ENCODE measurements at regions of chr2 and their contacts with region 1.

Region 1: GRCh38 chr2:71226965-71227560 is at the start of gene PAIP2B:
- DNase-seq: peak; percentile 98 to 99 (median 99)
- ATAC-seq: peak; percentile 95 to 98 (median 96)
- H3K4me3 ChIP-seq: peak within 1 kb of the TSS; percentile 64 to 91 (median 82)
- H3K27ac ChIP-seq: peak within 1 kb of the TSS; percentile 85 to 97 (median 94)
- H3K4me1 ChIP-seq: peaks cover 0 to 16% (median 7%) of the 10 kb centered on the region in 12 donors
- H3K27me3 ChIP-seq: peaks cover 0 to 5% (median 0%) of the 10 kb centered on the region in 9 donors
- CTCF ChIP-seq: no peak
- POLR2A ChIP-seq: peak; percentile 76 to 88
- total RNA-seq, gene PAIP2B: 38.3 to 89.0 (median 53.2) TPM

Region 2: GRCh38 chr2:71100195-71100964 is 126.7 kb before region 1 on chr2:
- intact Hi-C with region 1: no loop called
- DNase-seq: peak in 3 of 5 donors; percentile 22 to 38 (median 29)
- ATAC-seq: peak in 2 of 4 donors; percentile 52 to 63
- H3K4me3 ChIP-seq: no peak overlapping the region
- H3K27ac ChIP-seq: no peak overlapping the region
- H3K4me1 ChIP-seq: no peaks in the 10 kb centered on the region
- H3K27me3 ChIP-seq: no peaks in the 10 kb centered on the region
- CTCF ChIP-seq: peak; percentile 48 to 80 (median 64)
- POLR2A ChIP-seq: no peak

Region 3: DNA sequence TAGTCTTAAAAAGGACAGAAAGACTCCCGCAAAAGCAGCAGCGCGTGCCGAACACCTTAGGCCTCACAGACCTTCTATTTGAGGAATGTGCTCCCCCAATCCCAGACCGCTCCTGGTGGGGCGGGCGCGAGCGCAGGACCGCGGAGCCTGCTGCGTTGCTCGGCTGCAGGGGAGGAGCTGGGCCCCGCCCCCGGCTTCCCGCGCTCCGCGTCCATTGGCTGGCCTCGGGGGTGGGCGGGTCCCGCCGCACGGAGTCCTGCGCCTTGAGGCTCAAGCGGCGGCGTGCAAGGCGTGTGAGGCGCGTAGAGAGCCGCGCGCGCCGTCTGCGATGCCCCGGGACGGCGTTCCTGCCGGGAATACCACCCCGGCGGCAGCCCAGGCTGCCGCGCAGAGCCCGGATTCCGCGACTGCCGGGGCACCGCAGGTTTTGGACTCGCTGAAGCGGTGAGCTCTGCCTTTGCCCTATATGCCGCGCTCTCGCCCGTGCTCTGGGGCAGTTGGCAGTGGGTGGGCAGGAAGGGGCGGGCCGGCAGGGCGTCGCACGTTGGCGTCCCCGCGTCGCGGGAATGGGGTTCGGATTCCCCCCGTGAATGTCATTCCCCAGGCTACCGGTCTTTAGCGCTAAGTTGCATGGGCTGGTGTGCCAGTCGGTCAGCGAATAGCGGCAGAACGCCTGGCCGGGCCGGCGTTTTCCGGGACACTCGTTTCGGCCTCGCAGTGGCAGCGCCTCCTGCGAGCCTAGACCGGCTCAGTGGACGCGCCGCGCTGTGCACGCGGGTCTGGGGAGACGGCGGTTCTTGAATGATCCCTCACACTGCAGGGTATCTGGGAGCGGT is 49.5 kb after region 1 on chr2:
- intact Hi-C with region 1: loop called in 9 of 10 experiments (anchors 1 to 2 kb)
- DNase-seq: peak; percentile 91 to 95 (median 94)
- ATAC-seq: peak; percentile 89 to 99 (median 96)
- H3K4me3 ChIP-seq: peak overlapping the region; percentile 37 to 83 (median 64)
- H3K27ac ChIP-seq: peak overlapping the region; percentile 62 to 94 (median 89)
- H3K4me1 ChIP-seq: peaks cover 0 to 40% (median 17%) of the 10 kb centered on the region in 12 donors
- H3K27me3 ChIP-seq: peaks cover 0 to 14% (median 0%) of the 10 kb centered on the region in 9 donors
- CTCF ChIP-seq: peak in 3 of 12 donors; percentile 13 to 15 (median 14)
- POLR2A ChIP-seq: peak; percentile 68 to 94

Region 4: DNA sequence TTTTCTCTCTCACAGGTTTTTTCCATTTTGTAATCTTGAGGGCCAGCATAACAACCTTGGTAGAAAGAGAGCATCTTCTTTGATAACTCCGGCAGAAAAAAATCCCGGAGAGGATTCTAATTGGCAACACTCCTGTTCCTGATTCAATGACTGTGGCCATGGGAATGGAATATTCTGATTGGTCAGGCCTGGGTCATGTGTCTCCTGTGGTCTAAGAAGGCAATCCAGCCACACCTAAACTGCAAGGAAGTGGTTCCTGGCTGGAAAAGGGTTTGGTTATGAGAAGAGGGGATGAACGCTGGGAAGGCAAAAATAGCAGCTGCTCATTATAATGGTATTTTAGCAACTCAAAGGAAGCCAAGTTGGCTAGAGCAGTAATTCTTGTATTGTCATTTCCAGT is 79.7 kb after region 1 on chr2:
- intact Hi-C with region 1: no loop called
- DNase-seq: peak in 1 of 5 donors; percentile 34
- ATAC-seq: peak in 3 of 4 donors; percentile 81 to 91 (median 85)
- H3K4me3 ChIP-seq: no peak overlapping the region
- H3K27ac ChIP-seq: peak overlapping the region in 5 of 12 donors; percentile 18 to 44 (median 32)
- H3K4me1 ChIP-seq: peaks cover 0 to 18% (median 4%) of the 10 kb centered on the region in 12 donors
- H3K27me3 ChIP-seq: no peaks in the 10 kb centered on the region
- CTCF ChIP-seq: no peak
- POLR2A ChIP-seq: no peak

Region 5: GRCh38 chr2:71379088-71379487 is 152.0 kb after region 1 on chr2:
- intact Hi-C with region 1: loop called in 1 of 10 experiments (anchors 10 kb)
- DNase-seq: no peak
- ATAC-seq: peak in 2 of 4 donors; percentile 62 to 69
- H3K4me3 ChIP-seq: no peak overlapping the region
- H3K27ac ChIP-seq: no peak overlapping the region
- H3K4me1 ChIP-seq: peaks cover 0 to 10% (median under 1%) of the 10 kb centered on the region in 12 donors
- H3K27me3 ChIP-seq: no peaks in the 10 kb centered on the region
- CTCF ChIP-seq: no peak
- POLR2A ChIP-seq: no peak

Region 6: GRCh38 chr2:71505086-71505769 is 278.2 kb after region 1 on chr2:
- intact Hi-C with region 1: loop called in 4 of 10 experiments (anchors 2 to 5 kb)
- DNase-seq: peak in 3 of 5 donors; percentile 51 to 59 (median 51)
- ATAC-seq: peak in 3 of 4 donors; percentile 7 to 25 (median 20)
- H3K4me3 ChIP-seq: no peak overlapping the region
- H3K27ac ChIP-seq: peak overlapping the region in 11 of 12 donors; percentile 78 to 94 (median 87)
- H3K4me1 ChIP-seq: peaks cover 33 to 69% (median 53%) of the 10 kb centered on the region in 12 donors
- H3K27me3 ChIP-seq: no peaks in the 10 kb centered on the region
- CTCF ChIP-seq: no peak
- POLR2A ChIP-seq: no peak

Region 7: GRCh38 chr2:71563872-71564271 is 336.8 kb after region 1 on chr2:
- intact Hi-C with region 1: no loop called
- DNase-seq: peak in 1 of 5 donors; percentile 42
- ATAC-seq: peak in 1 of 4 donors; percentile 4
- H3K4me3 ChIP-seq: no peak overlapping the region
- H3K27ac ChIP-seq: no peak overlapping the region
- H3K4me1 ChIP-seq: no peaks in the 10 kb centered on the region
- H3K27me3 ChIP-seq: no peaks in the 10 kb centered on the region
- CTCF ChIP-seq: no peak
- POLR2A ChIP-seq: no peak